ENCODE measurements at regions of chr11 and their contacts with region 1.

Region 1: DNA sequence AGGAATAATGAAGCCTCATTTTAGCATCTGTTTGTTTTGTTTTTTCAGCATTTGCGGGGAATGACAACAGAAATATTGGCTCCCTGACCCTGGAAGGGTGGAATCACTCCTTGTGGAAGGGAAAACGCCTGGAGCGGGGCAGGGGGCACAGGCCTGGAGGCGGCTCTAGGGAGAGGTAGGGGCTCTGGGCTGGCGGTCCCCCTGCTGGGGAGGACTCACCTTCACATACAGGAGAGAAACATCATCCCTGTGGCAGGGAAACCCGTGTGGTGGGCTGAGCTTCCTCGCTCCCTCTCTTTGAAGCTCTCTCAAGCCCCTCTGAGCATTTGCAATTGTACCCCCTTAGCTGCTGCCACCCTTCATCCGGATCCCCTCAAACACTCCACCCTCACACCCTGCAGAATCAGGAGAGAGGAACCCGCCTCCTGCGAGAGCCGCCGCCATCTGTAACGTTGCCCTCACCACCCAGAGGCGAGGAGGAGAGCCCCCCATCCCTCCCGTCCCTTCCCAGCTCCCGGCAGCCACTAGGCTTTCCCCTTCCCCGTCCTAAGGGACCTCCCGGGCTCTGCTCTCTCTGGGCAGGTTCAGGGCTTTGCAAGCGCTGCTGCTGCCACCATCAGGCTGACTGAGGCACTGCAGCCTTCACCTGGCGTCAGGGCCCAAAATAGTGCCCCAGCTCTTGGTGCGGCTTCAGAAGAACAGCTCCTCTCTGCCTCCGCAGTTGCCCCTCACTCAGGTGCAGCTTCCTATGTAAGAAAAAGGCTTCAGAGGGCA is 10.4 kb downstream of the KIRREL3 start:
- H3K4me3 Mint-ChIP-seq: no peak overlapping the region
- H3K27ac Mint-ChIP-seq: no peak overlapping the region
- H3K4me1 Mint-ChIP-seq: no peaks in the 10 kb centered on the region
- H3K27me3 Mint-ChIP-seq: peaks cover 33% of the 10 kb centered on the region

Region 2: DNA sequence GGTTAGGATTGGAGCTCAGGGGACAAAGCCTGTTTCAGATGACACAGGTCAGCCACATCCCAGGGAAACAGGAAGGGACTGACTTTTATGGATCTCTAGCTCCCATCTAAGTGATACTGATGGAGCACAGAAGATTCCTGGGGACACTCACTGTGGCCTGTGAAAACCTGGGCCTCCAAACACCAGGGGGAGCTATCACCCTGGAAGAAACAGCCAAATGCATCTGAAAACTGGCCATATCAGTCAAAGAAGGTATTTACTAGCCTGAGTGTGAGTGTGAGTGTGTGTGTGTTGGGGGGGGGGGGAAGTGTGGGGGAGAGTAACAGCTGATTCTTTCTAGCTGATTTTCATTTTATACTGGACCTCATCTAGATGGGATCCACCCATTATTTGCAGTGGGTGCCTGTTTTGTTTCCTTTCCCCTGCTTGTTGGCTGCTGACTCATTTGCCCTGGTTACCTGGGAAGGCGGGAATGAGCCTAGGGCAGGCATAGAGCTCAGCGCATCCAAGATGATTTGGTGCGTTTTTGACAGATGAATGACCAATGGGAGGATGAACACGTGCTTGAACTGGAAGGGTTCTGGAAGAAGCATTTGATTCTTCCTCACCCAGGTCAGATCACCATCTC is 273.6 kb before region 1 on chr11:
- intact Hi-C with region 1: loop called (anchors 5 kb)
- H3K4me3 Mint-ChIP-seq: no peak overlapping the region
- H3K27ac Mint-ChIP-seq: no peak overlapping the region
- H3K4me1 Mint-ChIP-seq: no peaks in the 10 kb centered on the region
- H3K27me3 Mint-ChIP-seq: peaks cover 16% of the 10 kb centered on the region